ENCODE measurements at regions of chr18 and their contacts with region 1.

Region 1: DNA sequence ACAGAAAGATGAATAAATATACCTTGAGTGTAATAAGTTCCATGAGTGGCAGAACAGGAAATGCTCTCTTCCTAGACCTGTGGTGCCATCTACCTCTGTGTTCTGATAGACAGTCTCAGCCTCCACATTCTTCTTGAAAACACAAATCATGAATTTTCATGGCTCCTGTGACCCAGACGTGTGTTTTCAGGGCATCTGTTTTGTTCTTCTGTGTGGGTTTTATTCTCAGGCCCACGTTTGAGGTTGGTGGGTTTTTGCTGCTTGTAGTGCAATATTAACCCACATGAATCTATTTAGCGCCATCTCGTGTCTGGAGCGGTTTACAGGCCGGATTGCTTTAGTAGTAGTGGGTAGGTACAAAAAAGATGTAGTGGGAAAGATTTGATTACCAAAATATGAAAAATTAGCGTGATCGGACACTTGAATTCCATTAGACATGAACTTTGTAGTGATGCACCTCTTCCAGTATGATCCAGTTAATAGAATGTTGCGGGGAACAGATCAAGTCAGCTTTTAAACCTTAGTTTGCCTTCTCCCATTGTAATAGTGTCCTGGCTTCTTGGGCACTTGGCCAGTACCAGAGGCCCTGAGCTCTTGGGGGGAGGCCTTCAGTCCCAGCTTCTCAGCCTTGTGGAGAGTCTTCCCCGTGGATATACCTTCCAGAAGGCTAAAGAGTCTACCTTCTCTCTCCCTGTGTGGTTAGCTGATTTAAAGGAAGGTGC is 256.5 kb downstream of the TPGS2 start:
- DNase-seq: peak; percentile 28
- H3K4me3 Mint-ChIP-seq: no peak overlapping the region
- H3K27ac Mint-ChIP-seq: no peak overlapping the region
- H3K4me1 Mint-ChIP-seq: no peaks in the 10 kb centered on the region
- H3K27me3 Mint-ChIP-seq: peaks cover 1% of the 10 kb centered on the region

Region 2: DNA sequence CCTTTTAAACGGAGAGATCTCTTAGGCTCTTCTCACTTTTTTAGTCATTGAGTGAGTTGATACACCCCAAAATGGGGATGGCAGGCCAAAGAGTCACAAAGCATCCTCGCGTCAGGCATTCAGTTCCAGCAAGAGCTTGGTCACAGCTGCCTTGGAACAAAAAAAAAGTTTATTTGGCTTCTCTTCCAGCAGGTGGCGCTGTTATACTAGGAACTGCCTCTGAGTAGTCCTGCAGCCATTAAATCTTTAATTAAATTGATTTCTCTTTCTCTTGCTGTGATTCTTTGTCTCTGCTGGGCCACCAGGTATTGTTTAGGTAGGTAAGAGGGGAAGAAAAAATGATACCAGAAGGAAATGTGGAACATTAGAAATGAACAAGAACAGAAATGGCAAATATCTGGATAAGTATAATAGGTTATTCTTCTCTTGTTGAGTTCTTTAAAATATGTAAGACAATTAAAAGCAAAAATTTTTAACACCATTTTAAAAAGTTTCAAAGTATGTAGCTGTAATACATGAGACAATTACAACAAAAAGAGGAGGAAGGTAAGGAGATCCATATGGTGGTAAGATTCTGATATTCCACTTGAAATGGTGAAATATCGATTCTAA is 815.7 kb before region 1 on chr18:
- CTCF ChIA-PET with region 1: no interaction called
- POLR2A ChIA-PET with region 1: no interaction called
- intact Hi-C with region 1: loop called (anchors 5 kb)
- DNase-seq: peak; percentile 54
- H3K4me3 Mint-ChIP-seq: no peak overlapping the region
- H3K27ac Mint-ChIP-seq: no peak overlapping the region
- H3K4me1 Mint-ChIP-seq: no peaks in the 10 kb centered on the region
- H3K27me3 Mint-ChIP-seq: peaks cover 24% of the 10 kb centered on the region

Region 3: GRCh38 chr18:36095936-36096519 is 476.3 kb before region 1 on chr18:
- CTCF ChIA-PET with region 1: no interaction called
- POLR2A ChIA-PET with region 1: no interaction called
- intact Hi-C with region 1: loop called (anchors 1 kb)
- DNase-seq: no peak
- H3K4me3 Mint-ChIP-seq: no peak overlapping the region
- H3K27ac Mint-ChIP-seq: no peak overlapping the region
- H3K4me1 Mint-ChIP-seq: peaks cover 12% of the 10 kb centered on the region
- H3K27me3 Mint-ChIP-seq: peaks cover 2% of the 10 kb centered on the region

Region 4: DNA sequence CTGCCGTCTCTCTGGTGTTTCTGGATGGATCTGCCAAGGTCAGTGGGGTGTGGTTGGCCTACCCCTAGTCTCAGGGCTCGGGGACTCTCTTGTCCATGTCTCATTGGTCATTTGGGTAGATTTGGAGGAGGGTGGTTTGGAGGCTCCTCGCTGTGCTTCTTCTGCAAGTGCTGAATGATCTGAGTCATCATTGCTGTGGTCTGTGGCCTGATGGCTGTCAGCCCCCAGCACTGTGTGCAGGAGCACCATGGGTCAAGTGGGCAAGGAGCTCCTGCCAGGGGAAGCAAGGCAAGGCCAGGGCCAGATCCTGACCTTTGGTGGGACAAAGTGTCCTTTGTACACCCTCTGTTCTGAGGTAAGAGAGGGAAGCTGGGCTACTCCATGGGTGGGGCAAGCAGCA is 52.9 kb before region 1 on chr18:
- CTCF ChIA-PET with region 1: no interaction called
- POLR2A ChIA-PET with region 1: no interaction called
- intact Hi-C with region 1: no loop called
- DNase-seq: no peak
- H3K4me3 Mint-ChIP-seq: no peak overlapping the region
- H3K27ac Mint-ChIP-seq: no peak overlapping the region
- H3K4me1 Mint-ChIP-seq: no peaks in the 10 kb centered on the region
- H3K27me3 Mint-ChIP-seq: peaks cover 17% of the 10 kb centered on the region

Region 5: DNA sequence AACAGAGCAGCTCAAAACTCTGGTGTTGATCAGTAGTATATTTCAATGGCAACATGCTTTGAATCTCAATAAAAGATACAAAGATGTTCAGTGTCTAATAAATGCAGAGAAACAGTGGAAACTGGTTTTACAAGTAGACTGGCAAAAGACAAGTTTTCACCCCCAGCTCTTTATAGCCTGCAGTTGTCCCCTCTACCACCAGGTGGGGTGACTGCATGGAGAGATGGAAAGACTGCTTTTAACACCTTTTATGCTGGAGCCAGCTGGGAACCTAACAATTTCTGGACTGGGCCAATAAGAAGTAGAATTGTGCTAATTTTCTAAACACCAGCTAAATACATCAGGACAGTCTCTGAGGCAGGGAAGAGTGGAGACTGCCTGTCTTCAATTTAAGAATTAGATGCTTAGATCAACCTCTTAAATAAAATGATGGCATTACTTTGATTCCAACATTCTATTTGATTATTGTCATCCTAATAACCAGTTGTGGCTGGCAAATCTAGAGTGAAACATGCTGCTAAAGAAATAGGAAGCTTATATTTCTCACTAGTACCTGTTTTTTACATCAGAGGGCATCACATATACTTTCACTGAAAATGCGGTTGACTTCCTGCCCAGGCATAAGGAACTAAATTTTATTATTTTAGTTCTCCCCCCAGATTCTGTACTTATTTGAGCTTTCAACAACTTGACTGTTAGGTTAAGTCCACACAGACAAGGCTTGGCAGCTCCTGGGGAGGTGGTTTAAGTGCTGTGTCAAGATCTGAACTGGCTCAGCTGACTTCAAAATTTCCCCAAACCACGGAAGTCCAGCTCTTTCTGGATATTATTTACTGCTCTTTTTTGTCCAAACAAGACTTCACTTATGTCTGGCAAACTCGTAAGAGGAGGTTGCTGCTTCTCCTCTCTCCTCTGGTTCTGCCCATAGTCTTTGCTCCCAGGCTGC is 116.0 kb after region 1 on chr18:
- CTCF ChIA-PET with region 1: no interaction called
- POLR2A ChIA-PET with region 1: no interaction called
- intact Hi-C with region 1: no loop called
- DNase-seq: peak; percentile 63
- H3K4me3 Mint-ChIP-seq: no peak overlapping the region
- H3K27ac Mint-ChIP-seq: no peak overlapping the region
- H3K4me1 Mint-ChIP-seq: no peaks in the 10 kb centered on the region
- H3K27me3 Mint-ChIP-seq: peaks cover 8% of the 10 kb centered on the region